Activated CD4-positive, alpha-beta memory T cell treated with anti-CD3 and anti-CD28 coated beads for 36 hours (primary cell): ENCODE measurements at regions of chr12 and their contacts with region 1.

Region 1: GRCh38 chr12:118307069-118307954 is 65.4 kb downstream of the TAOK3 start:
- DNase-seq: peak; percentile 79
- H3K4me3 Mint-ChIP-seq: peak overlapping the region; percentile 64
- H3K27ac Mint-ChIP-seq: peak overlapping the region; percentile 86
- H3K4me1 Mint-ChIP-seq: peaks cover 41% of the 10 kb centered on the region
- H3K27me3 Mint-ChIP-seq: no peaks in the 10 kb centered on the region

Region 2: DNA sequence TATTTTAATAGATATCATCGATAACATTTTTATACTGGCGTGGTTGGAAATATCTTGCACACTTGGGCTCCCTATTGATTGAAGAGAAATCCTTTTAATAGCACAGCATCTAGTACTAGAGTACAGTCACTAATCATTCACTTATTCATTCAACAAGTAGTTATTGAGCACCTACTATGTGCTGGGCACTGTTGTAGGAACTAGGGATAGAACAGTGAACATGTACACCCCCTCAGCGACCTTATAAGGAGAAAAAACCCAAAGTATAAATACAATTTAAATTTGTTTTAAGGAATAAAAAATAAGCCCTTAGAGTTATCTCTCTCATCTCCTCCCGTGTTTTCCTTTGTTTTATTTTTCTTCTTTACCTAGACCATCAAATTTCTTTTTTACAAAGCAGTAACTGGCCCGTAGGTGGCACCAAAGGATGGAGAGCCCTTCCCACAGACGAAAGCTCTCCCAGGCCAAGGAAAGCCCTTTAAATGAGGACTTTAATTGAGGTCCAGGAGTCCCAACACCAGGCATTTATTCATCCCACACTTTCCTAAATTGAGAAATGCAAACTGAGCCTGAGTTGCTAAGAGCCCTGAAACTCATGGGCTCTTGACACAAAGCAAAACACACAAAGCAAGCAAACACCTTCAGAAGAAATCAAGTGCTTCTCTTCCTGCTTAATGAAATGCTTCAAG is 142.4 kb before region 1 on chr12:
- CTCF ChIA-PET with region 1: interaction called, 5 read pairs
- POLR2A ChIA-PET with region 1: no interaction called
- intact Hi-C with region 1: loop called (anchors 2 kb)
- DNase-seq: peak; percentile 33
- H3K4me3 Mint-ChIP-seq: no peak overlapping the region
- H3K27ac Mint-ChIP-seq: peak overlapping the region; percentile 30
- H3K4me1 Mint-ChIP-seq: peaks cover 37% of the 10 kb centered on the region
- H3K27me3 Mint-ChIP-seq: no peaks in the 10 kb centered on the region

Region 3: DNA sequence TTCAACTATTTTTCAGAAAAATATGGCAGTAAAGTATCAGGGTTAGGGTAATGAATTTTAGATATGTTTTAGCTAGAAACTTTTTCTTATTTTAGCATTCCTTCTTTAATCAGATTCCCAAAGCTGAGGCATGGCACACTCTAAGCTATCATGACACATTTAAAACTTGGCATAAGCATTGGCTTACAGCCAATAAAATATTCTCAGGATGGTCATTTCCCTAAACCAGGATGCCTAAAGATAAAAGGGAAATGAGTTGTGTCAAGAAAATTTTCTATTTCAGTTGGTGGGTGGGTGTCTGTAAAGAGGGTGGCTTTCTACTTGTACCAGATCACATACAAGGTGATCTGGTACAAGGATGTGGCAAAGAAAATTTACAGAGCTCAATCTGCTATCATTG is 123.6 kb before region 1 on chr12:
- CTCF ChIA-PET with region 1: interaction called, 7 read pairs
- POLR2A ChIA-PET with region 1: no interaction called
- intact Hi-C with region 1: loop called (anchors 1 kb)
- DNase-seq: no peak
- H3K4me3 Mint-ChIP-seq: no peak overlapping the region
- H3K27ac Mint-ChIP-seq: no peak overlapping the region
- H3K4me1 Mint-ChIP-seq: peaks cover 20% of the 10 kb centered on the region
- H3K27me3 Mint-ChIP-seq: no peaks in the 10 kb centered on the region

Region 4: DNA sequence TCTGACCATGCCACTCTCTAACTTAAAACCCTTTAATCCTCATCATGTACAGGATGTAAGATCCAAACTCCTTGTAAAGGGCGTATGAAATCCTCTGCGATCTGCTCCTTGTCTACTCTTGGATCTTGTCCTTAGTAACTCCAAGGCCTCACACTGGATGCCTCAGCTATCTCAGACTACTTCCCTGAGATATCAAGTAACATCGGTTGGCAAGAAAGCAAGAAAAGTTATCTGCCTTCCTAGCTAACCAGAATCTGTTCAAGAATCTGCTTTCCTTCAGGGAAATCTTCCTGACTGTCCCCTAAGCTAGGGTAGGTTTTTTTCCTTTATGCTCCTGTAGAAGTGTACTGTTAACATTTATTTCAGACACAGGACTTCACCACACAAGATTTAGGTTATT is 17.2 kb before region 1 on chr12:
- CTCF ChIA-PET with region 1: no interaction called
- POLR2A ChIA-PET with region 1: no interaction called
- intact Hi-C with region 1: no loop called
- DNase-seq: no peak
- H3K4me3 Mint-ChIP-seq: no peak overlapping the region
- H3K27ac Mint-ChIP-seq: no peak overlapping the region
- H3K4me1 Mint-ChIP-seq: no peaks in the 10 kb centered on the region
- H3K27me3 Mint-ChIP-seq: no peaks in the 10 kb centered on the region